Right ventricle myocardium inferior (tissue), 1 donor: ENCODE measurements at regions of chr5 and their contacts with region 1.

Region 1: GRCh38 chr5:64074533-64074932 is 91.1 kb upstream of the RNF180 start:
- DNase-seq: no peak
- ATAC-seq: no peak

Region 2: GRCh38 chr5:63774939-63775338 is 299.6 kb before region 1 on chr5:
- intact Hi-C with region 1: no loop called
- DNase-seq: no peak
- ATAC-seq: no peak

Region 3: DNA sequence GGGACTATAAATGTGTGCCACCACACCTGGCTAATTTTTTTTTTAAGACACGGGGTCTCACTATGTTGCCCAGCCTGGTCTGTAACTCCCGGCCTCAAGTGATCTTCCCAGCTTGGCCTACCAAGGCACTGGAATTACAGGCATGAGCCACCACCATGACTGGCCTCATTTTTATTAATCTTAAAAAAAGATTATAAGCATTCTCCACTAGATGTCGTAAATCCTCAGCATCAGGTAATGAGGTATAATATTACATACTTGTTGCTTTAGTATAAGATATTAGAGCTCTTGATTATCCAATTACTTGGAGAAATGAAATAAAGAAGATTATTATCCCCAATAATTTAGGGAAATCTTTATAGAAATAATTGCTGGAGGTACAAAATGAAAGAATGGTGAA is 34.0 kb before region 1 on chr5:
- intact Hi-C with region 1: no loop called
- DNase-seq: no peak
- ATAC-seq: no peak

Region 4: GRCh38 chr5:64195981-64196380 is 121.4 kb after region 1 on chr5:
- intact Hi-C with region 1: no loop called
- DNase-seq: no peak
- ATAC-seq: no peak

Region 5: GRCh38 chr5:64207978-64208377 is 133.4 kb after region 1 on chr5:
- intact Hi-C with region 1: loop called (anchors 2 kb)
- DNase-seq: no peak
- ATAC-seq: no peak